Pancreas (tissue), 10 donors: ENCODE measurements at regions of chr16 and their contacts with region 1.

Region 1: DNA sequence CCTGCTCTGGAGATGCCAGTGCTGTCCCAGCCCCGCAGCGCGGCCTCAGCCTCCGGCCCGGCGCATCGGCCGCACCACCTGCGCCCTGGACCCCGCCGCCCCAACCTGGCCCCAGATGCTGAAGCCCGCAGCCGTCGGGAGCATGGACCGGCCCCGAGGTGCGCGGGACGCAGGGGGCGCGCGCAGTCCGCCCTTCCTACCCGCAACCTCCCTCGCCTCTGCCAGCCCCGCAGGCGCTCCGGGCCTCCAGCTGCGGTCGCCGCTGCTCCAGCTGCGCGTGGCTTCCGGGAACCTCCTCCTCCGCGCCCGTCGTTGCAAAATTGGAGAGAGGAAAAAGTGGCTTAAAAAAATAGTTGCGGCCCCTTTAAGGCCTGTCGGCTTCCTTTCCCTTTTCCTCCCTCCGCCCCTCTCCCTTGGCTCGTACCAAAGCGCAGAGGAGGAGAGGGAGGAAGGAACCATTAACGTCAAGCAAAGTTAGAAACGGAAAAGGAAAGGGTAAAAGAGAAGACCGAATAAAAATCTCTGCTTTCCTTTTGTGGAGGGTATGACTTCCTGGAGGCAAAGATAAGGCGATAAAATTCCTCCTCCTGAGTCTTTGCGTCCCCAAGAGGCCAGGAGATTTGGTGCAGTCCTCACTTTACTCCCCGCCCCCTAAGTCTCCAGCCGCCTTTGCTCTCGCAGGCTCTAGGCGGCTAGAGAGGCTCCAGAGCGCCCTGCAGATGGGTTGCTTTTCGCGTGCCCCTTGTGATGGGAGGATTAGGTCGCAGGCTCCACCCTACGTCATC is at the start of gene CDIPT:
- DNase-seq: peak; percentile 82 to 96 (median 94)
- ATAC-seq: peak; percentile 96 to 99 (median 96)
- H3K4me3 ChIP-seq: peak within 1 kb of the TSS; percentile 76 to 100 (median 89)
- H3K27ac ChIP-seq: peak within 1 kb of the TSS; percentile 85 to 96 (median 90)
- H3K4me1 ChIP-seq: peaks cover 0 to 16% (median 11%) of the 10 kb centered on the region in 3 donors
- H3K27me3 ChIP-seq: no peaks in the 10 kb centered on the region
- CTCF ChIP-seq: peak; percentile 17 to 32 (median 24)
- total RNA-seq, gene CDIPT: 31.9 to 50.9 (median 37.3) TPM

Region 2: DNA sequence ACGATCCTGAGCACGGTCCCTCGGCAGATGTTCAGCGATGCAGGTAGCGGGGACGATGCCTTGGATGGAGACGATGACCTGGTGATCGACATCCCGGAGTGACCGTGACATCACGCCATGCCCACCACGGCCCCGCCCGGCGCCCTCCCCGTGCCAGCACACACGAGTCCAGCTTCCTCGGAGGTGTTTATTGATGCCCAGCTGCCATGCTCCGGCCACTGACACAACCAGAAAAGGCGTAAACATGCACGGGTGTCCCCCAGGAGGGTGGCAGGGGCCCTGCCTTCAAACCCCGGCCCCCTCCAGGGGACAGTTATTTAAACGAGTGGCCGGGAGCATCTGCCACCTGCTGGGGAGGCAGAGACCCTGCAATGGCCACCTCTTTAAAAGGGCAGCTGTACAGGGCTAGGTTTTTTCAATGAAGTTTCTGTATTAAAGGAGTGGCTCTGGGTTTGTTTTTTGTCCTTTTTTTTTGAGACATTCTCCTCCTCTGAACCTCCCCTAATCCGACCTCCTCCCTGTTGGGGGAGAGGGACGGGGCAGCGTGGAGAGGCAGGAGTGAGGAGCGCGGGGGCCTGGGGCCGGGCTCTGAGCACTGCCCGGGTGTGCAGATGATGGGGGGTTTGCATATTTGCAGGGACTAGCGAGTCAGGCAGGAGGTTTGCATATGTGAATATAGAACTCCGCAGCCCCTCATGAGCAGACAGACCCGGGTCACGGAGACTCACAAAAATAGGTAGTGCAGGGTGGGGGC is 142.4 kb after region 1 on chr16:
- intact Hi-C with region 1: loop called in 1 of 3 experiments (anchors 10 kb)
- DNase-seq: peak in 3 of 6 donors; percentile 47 to 74 (median 49)
- ATAC-seq: peak; percentile 62 to 85 (median 79)
- H3K4me3 ChIP-seq: no peak overlapping the region
- H3K27ac ChIP-seq: no peak overlapping the region
- H3K4me1 ChIP-seq: no peaks in the 10 kb centered on the region
- H3K27me3 ChIP-seq: no peaks in the 10 kb centered on the region
- CTCF ChIP-seq: peak; percentile 67 to 86 (median 75)